Activated CD8-positive, alpha-beta T cell treated with anti-CD3 and anti-CD28 coated beads, Interleukin-2, amount 10 ng/mL, durations not matched to agents 7 days and 5 days (primary cell): ENCODE measurements at regions of chr6 and their contacts with region 1.

Region 1: GRCh38 chr6:106223300-106223930 is 102.1 kb downstream of the ATG5 start:
- DNase-seq: peak; percentile 87
- ATAC-seq: peak; percentile 87
- H3K4me3 Mint-ChIP-seq: no peak overlapping the region
- H3K27ac Mint-ChIP-seq: no peak overlapping the region
- H3K4me1 Mint-ChIP-seq: peaks cover 26% of the 10 kb centered on the region
- H3K27me3 Mint-ChIP-seq: no peaks in the 10 kb centered on the region

Region 2: GRCh38 chr6:105484238-105485161 is 738.9 kb before region 1 on chr6:
- CTCF ChIA-PET with region 1: interaction called, 17 read pairs
- POLR2A ChIA-PET with region 1: no interaction called
- DNase-seq: no peak
- ATAC-seq: peak; percentile 51
- H3K4me3 Mint-ChIP-seq: peak overlapping the region; percentile 12
- H3K27ac Mint-ChIP-seq: peak overlapping the region; percentile 7
- H3K4me1 Mint-ChIP-seq: peaks cover 47% of the 10 kb centered on the region
- H3K27me3 Mint-ChIP-seq: peaks cover 2% of the 10 kb centered on the region

Region 3: GRCh38 chr6:105992315-105992961 is 231.0 kb before region 1 on chr6:
- CTCF ChIA-PET with region 1: interaction called, 19 read pairs
- POLR2A ChIA-PET with region 1: no interaction called
- DNase-seq: peak; percentile 92
- ATAC-seq: peak; percentile 90
- H3K4me3 Mint-ChIP-seq: peak overlapping the region; percentile 95
- H3K27ac Mint-ChIP-seq: peak overlapping the region; percentile 90
- H3K4me1 Mint-ChIP-seq: peaks cover 49% of the 10 kb centered on the region
- H3K27me3 Mint-ChIP-seq: peaks cover 64% of the 10 kb centered on the region

Region 4: DNA sequence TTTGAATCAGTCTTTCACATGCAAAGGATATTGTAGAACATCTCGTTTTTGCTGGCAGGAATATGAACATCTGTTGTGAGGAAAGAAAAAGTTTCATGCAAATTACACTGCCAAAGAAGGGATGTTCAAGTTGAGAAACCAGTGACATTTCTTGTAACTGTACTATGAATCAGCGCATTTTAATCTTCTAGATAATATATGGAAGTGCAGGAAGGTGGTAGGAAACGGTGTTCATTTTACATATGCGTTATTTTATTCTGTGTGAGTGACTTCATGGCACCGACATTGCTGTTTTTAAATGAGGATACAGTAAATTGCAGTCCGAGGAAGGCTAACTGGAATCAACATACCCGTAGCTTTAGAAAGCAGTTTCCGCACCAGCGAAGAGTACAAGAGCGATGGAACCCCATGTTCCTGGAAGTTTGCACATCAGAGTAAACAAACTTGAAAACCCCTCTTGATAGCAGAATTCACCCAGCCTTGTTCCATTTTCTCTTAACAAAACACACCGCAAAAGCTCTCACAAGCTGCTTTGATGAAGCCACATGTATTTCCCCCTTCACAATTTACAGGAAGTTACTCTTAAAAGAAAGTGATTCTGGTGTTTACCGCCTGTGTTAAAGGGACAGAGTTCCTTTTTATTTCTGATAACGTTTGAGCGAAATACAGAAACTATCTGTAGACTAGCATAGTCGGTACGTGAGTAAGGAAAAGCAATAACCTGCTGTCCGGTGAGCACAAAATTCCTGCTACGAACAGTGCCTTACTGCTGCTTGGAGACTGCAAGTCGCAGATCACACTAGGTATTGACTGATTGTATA is 125.8 kb before region 1 on chr6:
- CTCF ChIA-PET with region 1: interaction called, 35 read pairs
- POLR2A ChIA-PET with region 1: interaction called, 4 read pairs
- DNase-seq: peak; percentile 76
- ATAC-seq: peak; percentile 78
- H3K4me3 Mint-ChIP-seq: peak overlapping the region; percentile 87
- H3K27ac Mint-ChIP-seq: peak overlapping the region; percentile 92
- H3K4me1 Mint-ChIP-seq: peaks cover 86% of the 10 kb centered on the region
- H3K27me3 Mint-ChIP-seq: peaks cover 2% of the 10 kb centered on the region

Region 5: GRCh38 chr6:106141441-106142237 is 81.8 kb before region 1 on chr6:
- CTCF ChIA-PET with region 1: interaction called, 40 read pairs
- POLR2A ChIA-PET with region 1: interaction called, 3 read pairs
- DNase-seq: peak; percentile 85
- ATAC-seq: peak; percentile 87
- H3K4me3 Mint-ChIP-seq: peak overlapping the region; percentile 67
- H3K27ac Mint-ChIP-seq: peak overlapping the region; percentile 97
- H3K4me1 Mint-ChIP-seq: peaks cover 73% of the 10 kb centered on the region
- H3K27me3 Mint-ChIP-seq: no peaks in the 10 kb centered on the region

Region 6: DNA sequence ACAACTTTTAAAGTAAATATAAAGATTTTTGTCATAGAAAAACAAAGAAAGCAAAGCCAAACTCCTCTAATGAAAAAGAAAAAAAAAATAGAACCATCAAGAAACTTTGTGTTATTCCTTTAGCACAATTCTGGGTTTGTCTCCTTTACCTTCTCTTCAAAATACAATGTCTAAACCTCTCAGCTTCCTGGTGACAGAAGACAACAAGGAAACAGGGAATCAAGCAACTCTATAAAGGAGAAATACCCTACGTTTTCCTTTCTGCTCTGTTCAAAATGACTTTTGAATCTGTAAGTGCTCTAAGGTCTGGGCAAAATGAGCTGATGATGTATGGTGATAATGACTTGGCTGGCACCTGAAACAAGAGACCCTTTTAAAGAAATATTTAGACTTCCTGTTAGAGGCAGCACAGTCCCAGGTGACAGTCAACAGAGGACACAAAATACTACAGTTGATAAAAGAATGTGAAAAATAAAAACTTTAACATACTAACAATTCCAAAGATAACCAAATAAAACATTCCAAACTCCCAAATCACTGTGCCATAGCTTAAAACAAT is 35.9 kb before region 1 on chr6:
- CTCF ChIA-PET with region 1: interaction called, 19 read pairs
- POLR2A ChIA-PET with region 1: no interaction called
- DNase-seq: no peak
- ATAC-seq: peak; percentile 59
- H3K4me3 Mint-ChIP-seq: peak overlapping the region; percentile 24
- H3K27ac Mint-ChIP-seq: peak overlapping the region; percentile 76
- H3K4me1 Mint-ChIP-seq: peaks cover 60% of the 10 kb centered on the region
- H3K27me3 Mint-ChIP-seq: no peaks in the 10 kb centered on the region